Activated CD4-positive, alpha-beta T cell treated with anti-CD3 and anti-CD28 coated beads for 36 hours (primary cell): ENCODE measurements at regions of chr14 and their contacts with region 1.

Region 1: DNA sequence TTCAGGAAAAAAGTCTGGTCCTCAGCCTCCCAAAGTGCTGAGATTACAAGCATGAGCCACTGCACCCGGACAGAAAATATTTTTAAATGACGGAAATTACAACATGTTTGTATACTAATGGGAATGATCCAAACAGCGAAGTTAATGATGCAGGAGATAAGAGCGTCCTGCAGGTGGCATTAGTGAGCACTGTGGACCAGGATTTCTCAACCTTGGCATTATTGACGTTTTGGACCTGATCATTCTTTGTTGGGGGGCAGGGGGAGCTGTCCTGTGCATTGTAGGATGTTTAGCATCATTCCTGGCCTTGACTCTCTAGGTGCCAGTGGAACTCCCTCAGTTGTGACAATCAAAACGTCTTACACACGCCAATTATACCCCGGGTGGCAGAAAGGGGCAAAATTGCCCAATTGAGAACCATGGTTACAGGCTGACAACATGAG is 34.1 kb downstream of the SCFD1 start:
- DNase-seq: peak; percentile 44
- ATAC-seq: no peak
- H3K4me3 Mint-ChIP-seq: no peak overlapping the region
- H3K27ac Mint-ChIP-seq: no peak overlapping the region
- H3K4me1 Mint-ChIP-seq: no peaks in the 10 kb centered on the region
- H3K27me3 Mint-ChIP-seq: no peaks in the 10 kb centered on the region

Region 2: GRCh38 chr14:30349520-30349919 is 306.7 kb before region 1 on chr14:
- CTCF ChIA-PET with region 1: no interaction called
- POLR2A ChIA-PET with region 1: no interaction called
- intact Hi-C with region 1: no loop called
- DNase-seq: no peak
- ATAC-seq: no peak
- H3K4me3 Mint-ChIP-seq: no peak overlapping the region
- H3K27ac Mint-ChIP-seq: no peak overlapping the region
- H3K4me1 Mint-ChIP-seq: peaks cover 5% of the 10 kb centered on the region
- H3K27me3 Mint-ChIP-seq: peaks cover 9% of the 10 kb centered on the region

Region 3: GRCh38 chr14:30569216-30569902 is 86.9 kb before region 1 on chr14:
- CTCF ChIA-PET with region 1: no interaction called
- POLR2A ChIA-PET with region 1: no interaction called
- intact Hi-C with region 1: no loop called
- DNase-seq: no peak
- ATAC-seq: no peak
- H3K4me3 Mint-ChIP-seq: no peak overlapping the region
- H3K27ac Mint-ChIP-seq: no peak overlapping the region
- H3K4me1 Mint-ChIP-seq: peaks cover 79% of the 10 kb centered on the region
- H3K27me3 Mint-ChIP-seq: no peaks in the 10 kb centered on the region

Region 4: DNA sequence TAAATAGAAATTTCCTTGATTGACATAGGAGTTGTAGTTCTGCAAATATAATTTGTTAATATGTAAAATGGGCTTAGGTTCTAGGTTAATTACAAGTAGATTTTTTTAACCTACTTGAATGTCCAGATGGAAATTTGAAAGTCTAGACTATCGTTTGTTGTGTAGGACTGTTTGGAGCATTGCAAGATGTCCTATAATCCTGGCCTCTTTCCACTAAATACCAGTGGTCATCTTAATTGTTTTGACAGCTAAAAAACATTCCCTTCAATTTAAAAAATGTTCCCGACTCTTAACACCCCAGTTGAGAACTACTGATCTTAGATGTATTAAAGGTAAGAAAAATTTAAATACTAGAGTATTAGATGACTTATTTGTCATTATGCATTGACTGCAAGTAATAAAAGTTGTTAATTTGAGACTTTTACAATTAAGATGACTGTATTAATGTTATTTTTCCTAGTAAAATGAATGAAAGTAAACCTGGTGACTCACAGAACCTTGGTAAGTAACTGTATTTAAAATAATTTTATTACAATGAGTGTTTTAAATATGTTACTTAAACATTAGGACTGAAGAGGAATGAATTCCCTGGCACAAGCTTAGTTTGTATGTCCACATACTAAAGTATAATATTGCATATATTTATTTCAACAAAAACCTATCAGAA is 75.5 kb before region 1 on chr14:
- CTCF ChIA-PET with region 1: no interaction called
- POLR2A ChIA-PET with region 1: no interaction called
- intact Hi-C with region 1: no loop called
- DNase-seq: no peak
- ATAC-seq: no peak
- H3K4me3 Mint-ChIP-seq: no peak overlapping the region
- H3K27ac Mint-ChIP-seq: no peak overlapping the region
- H3K4me1 Mint-ChIP-seq: peaks cover 31% of the 10 kb centered on the region
- H3K27me3 Mint-ChIP-seq: no peaks in the 10 kb centered on the region

Region 5: DNA sequence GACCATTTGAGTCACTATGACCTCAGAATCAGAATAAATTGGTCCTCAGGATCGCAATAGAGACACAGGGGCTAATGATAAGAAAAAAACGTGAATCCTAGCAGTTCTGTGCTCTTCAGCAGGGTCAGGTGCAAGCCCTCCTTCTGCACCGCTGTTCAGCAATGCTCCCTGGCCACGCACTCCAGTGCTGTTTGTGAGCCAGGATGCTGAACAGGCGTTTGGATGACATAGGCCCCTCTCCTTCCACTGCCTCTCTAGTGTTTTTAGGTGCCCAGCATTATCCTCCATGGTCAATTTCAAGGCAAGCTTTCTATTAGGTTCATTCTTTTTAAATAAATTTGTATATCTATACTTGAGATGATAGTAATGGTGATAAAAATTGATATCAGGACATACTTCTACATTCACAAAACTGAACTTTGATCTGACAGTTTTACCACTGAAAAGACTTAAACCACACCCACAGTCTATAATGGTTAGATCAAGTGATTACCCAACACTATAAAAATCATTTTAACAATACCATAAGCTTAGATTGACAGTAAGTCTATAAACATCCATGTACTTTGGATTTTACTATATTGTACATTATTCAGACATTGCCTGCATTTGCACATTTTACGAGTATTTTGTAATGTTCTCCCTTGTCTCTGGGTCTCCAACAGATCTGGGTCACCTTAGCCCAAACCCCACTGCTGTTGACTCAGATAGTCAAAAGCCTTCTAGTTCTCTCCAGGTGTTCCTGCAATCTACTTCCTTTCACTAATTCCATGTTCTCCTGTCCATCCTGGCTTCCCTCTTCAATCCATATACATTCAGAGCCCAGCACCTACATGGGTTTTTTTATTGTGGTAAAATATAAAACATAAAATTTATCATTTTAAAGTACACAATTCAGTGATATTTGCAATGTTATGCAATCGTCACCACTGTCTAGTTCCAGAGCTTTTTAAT is 103.2 kb after region 1 on chr14:
- CTCF ChIA-PET with region 1: no interaction called
- POLR2A ChIA-PET with region 1: no interaction called
- intact Hi-C with region 1: no loop called
- DNase-seq: no peak
- ATAC-seq: no peak
- H3K4me3 Mint-ChIP-seq: no peak overlapping the region
- H3K27ac Mint-ChIP-seq: no peak overlapping the region
- H3K4me1 Mint-ChIP-seq: no peaks in the 10 kb centered on the region
- H3K27me3 Mint-ChIP-seq: peaks cover 11% of the 10 kb centered on the region

Region 6: DNA sequence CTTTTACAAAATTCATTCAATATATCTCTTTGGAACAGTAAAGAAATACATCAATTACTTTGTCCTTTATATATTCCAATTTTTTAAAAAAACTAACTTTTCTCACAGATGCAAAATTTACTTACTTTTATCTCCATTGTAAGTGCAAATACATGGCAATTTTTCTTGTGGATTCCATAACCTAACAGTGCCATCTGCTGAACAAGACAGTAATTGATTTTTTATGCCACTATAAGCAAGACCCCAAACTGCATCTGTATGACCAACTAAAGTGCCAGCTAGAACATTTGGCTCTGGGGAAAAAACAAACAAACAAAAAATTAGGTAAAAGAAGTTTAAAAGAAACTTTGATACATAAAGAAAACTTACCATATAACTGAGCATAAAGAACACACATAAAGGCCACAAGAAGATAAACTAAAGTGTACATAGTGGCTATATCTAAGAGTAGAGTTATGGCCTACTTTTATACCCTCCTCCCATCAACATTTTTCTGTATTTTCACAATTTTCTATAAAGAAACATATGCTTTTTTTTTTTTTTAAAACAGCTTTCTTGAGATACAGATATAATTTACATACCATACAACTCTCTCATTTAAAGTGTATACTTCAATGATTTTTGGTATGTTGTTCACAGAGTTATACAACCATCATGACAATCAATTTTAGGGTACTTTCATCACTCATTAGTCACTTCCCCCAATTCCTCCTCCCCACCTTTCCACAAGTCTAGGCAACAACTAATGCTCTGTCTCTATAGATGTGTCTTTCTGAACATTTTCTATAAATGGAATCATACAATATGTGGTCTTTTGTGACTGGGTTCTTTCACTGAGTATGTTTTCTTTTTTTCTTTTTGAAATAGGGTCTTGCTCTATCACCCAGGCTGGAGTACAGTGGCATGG is 250.8 kb after region 1 on chr14:
- CTCF ChIA-PET with region 1: interaction called, 4 read pairs
- POLR2A ChIA-PET with region 1: no interaction called
- intact Hi-C with region 1: loop called in 1 of 2 experiments (anchors 1 kb)
- DNase-seq: no peak
- ATAC-seq: no peak
- H3K4me3 Mint-ChIP-seq: no peak overlapping the region
- H3K27ac Mint-ChIP-seq: no peak overlapping the region
- H3K4me1 Mint-ChIP-seq: no peaks in the 10 kb centered on the region
- H3K27me3 Mint-ChIP-seq: no peaks in the 10 kb centered on the region